Pancreas (tissue), 10 donors: ENCODE measurements at regions of chr1 and their contacts with region 1.

Region 1: DNA sequence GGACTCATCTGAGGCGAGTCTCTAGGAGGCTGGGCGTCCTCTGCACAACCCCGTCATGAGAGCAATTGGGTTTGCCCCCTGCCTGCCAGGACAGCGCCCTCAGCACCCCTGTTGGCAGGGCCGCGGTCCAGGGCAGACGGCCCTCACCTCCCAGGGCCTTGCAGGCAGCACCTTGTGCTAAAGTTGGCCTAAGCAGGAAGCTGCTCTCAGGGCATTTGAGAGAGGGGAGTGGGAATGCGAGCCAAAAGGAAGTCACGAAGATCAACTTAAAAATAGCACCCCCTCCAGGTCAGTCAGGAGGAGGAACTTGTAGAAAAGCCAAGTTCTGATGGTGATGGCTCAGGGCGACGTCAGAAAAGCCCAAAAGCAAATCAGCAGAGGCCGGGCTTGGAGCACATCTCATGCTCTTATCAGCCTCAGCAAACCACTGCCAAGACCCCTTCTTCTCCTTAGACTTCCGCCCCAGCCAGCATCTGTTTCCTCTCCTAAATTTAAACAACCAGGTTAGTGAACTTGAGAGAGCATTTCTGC is 12.6 kb upstream of the ADORA3 start:
- DNase-seq: peak in 1 of 6 donors; percentile 14
- ATAC-seq: peak; percentile 35 to 68 (median 58)
- H3K4me3 ChIP-seq: peak overlapping the region in 2 of 4 donors; percentile 6 to 33
- H3K27ac ChIP-seq: peak overlapping the region in 2 of 4 donors; percentile 37 to 57
- H3K4me1 ChIP-seq: no peaks in the 10 kb centered on the region
- H3K27me3 ChIP-seq: no peaks in the 10 kb centered on the region
- CTCF ChIP-seq: peak in 1 of 4 donors; percentile 8

Region 2: DNA sequence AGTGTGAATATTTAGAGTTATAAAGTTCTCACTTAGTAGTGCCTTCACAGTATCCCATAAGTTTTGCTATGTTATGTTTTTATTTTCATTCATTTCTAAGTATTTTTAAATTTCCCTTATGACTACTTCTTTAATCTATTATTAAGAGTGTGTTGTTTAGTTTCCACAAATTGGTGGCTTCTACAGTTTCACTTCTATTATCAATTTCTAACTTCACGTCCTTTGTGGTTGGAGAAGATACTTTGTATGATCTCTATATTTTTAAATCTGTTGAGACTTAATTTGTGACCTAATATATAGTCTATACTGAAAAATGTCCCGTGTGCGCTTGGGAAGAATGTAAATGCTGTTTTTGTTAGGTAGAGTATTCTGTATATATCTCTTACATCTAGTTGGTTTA is 213.7 kb before region 1 on chr1:
- intact Hi-C with region 1: no loop called
- DNase-seq: no peak
- ATAC-seq: no peak
- H3K4me3 ChIP-seq: no peak overlapping the region
- H3K27ac ChIP-seq: no peak overlapping the region
- H3K4me1 ChIP-seq: no peaks in the 10 kb centered on the region
- H3K27me3 ChIP-seq: no peaks in the 10 kb centered on the region
- CTCF ChIP-seq: no peak

Region 3: GRCh38 chr1:111648806-111649205 is 132.7 kb after region 1 on chr1:
- intact Hi-C with region 1: loop called in 1 of 3 experiments (anchors 10 kb)
- DNase-seq: no peak
- ATAC-seq: no peak
- H3K4me3 ChIP-seq: no peak overlapping the region
- H3K27ac ChIP-seq: no peak overlapping the region
- H3K4me1 ChIP-seq: no peaks in the 10 kb centered on the region
- H3K27me3 ChIP-seq: no peaks in the 10 kb centered on the region
- CTCF ChIP-seq: no peak

Region 4: GRCh38 chr1:111656086-111657017 is 140.3 kb after region 1 on chr1:
- intact Hi-C with region 1: loop called in 1 of 3 experiments (anchors 5 kb)
- DNase-seq: peak in 1 of 6 donors; percentile 32
- ATAC-seq: peak; percentile 73 to 91 (median 88)
- H3K4me3 ChIP-seq: no peak overlapping the region
- H3K27ac ChIP-seq: peak overlapping the region in 1 of 4 donors; percentile 5
- H3K4me1 ChIP-seq: peaks cover 9 to 25% (median 23%) of the 10 kb centered on the region in 3 donors
- H3K27me3 ChIP-seq: no peaks in the 10 kb centered on the region
- CTCF ChIP-seq: peak in 3 of 4 donors; percentile 33 to 45 (median 39)